Aorta (tissue), 5 donors: ENCODE measurements at regions of chr21 and their contacts with region 1.

Region 1: GRCh38 chr21:32329331-32329730 is 30.7 kb downstream of the MRAP start:
- DNase-seq: peak in 1 of 2 donors; percentile 77
- ATAC-seq: peak; percentile 91
- H3K4me3 ChIP-seq: no peak overlapping the region
- H3K27ac ChIP-seq: peak overlapping the region; percentile 46 to 96
- H3K4me1 ChIP-seq: peaks cover 3 to 4% of the 10 kb centered on the region in 2 donors
- H3K27me3 ChIP-seq: no peaks in the 10 kb centered on the region

Region 2: DNA sequence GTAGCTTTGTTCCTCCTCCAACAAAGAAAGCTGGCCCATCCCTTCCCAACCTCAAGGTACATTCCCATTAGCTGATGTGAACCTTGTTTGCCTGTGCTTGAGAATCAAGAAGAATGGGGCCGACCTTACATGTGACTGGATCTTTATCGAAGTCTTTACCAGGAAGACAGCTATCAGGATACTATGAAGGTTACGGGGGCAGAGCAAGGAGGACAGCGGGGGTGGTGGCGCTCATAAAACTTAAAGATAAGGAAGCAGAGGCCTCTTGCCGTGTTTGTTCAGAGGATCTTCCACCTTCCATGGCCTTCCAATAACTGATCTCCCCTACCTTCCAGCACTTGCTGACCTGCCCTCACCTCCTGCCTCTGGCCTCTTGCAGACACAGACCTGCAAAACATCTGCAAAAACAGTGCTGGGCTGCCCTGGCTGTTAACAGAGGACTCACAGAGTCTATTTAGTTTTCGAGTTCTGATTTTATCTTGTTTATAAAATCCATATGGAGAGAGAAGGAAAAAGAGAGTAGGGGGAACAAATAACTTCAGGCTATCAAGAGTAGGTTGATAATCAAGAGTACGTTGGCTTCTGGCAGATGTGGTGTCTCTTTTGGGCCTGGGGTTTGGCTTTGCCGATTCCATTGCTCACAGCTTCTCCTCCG is 258.5 kb before region 1 on chr21:
- intact Hi-C with region 1: no loop called
- DNase-seq: no peak
- ATAC-seq: no peak
- H3K4me3 ChIP-seq: no peak overlapping the region
- H3K27ac ChIP-seq: no peak overlapping the region
- H3K4me1 ChIP-seq: no peaks in the 10 kb centered on the region
- H3K27me3 ChIP-seq: no peaks in the 10 kb centered on the region

Region 3: DNA sequence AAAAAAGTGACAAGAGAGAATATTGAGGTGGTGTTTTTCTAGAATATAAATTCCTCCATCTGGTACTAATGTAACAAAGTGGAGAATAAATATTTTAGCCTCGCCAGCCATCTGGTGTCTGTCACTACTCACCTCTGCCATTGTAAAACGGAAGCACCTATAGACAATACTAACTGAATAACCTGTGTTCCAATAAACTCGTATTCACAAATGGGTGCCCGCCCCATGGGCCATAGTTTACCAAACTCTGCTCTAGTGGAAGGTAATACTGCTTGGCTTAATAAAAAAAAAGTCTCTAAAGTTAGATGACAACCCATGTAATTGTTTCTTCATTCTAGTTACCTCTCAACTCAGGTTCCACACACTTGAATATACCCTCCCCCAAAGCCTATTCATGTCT is 58.6 kb before region 1 on chr21:
- intact Hi-C with region 1: no loop called
- DNase-seq: no peak
- ATAC-seq: no peak
- H3K4me3 ChIP-seq: no peak overlapping the region
- H3K27ac ChIP-seq: no peak overlapping the region
- H3K4me1 ChIP-seq: no peaks in the 10 kb centered on the region
- H3K27me3 ChIP-seq: no peaks in the 10 kb centered on the region

Region 4: DNA sequence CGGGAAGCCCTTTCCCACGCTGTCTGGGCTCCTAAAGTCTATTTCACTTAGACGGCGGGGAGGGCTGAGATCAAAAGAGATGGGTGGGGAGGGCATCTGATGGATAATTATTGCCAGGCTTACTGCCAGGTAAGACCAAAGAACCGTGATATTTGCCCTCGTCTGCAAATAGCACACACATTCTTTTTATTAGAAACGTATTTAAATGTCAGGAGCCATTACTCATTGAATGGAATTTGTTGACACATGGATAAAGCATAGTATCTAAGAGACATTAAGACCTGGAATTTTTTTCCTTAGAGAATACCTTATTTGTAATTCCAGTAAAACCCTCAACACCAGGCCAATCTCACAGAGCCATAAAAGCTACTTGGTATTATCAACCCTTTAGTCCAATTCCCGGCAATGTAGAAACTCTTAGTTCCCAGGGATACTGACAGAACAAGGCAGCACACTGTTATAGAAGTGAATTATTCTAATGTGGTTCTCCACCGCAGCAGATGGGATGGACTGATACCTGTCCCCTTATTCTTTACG is 52.8 kb after region 1 on chr21:
- intact Hi-C with region 1: loop called in 1 of 2 experiments (anchors 5 kb)
- DNase-seq: no peak
- ATAC-seq: no peak
- H3K4me3 ChIP-seq: no peak overlapping the region
- H3K27ac ChIP-seq: peak overlapping the region; percentile 94 to 95
- H3K4me1 ChIP-seq: peaks cover 0 to 7% of the 10 kb centered on the region in 2 donors
- H3K27me3 ChIP-seq: no peaks in the 10 kb centered on the region